ENCODE measurements at regions of chr14 and their contacts with region 1.

Region 1: GRCh38 chr14:21498553-21499526 is 12.3 kb downstream of the METTL3 start:
- DNase-seq: peak; percentile 39 to 58 (median 44)
- ATAC-seq: peak; percentile 78
- H3K4me3 ChIP-seq: no peak overlapping the region
- H3K27ac ChIP-seq: no peak overlapping the region
- H3K4me1 ChIP-seq: no peaks in the 10 kb centered on the region
- H3K27me3 ChIP-seq: no peaks in the 10 kb centered on the region
- CTCF ChIP-seq: peak; percentile 36 to 60 (median 54); a peak in 4 of 6 replicates
- EP300 ChIP-seq: no peak
- POLR2A ChIP-seq: no peak
- RAD21 ChIP-seq: peak; percentile 38 to 63; a peak in 3 of 4 replicates

Region 2: DNA sequence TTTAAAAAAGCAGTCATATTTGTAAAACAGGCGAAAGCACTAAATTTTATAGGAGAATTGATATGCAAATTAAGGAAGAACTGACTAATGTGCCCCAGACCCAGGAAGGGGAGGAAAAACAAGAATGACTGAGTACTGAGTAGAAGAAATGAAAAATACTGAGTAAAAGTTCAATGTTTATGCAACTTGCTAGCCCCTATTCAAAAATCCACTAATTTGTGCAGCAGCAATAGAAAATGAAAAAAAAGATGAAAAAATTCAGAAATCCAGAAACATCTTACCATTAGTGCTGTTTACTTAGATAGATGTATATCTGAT is 49.0 kb before region 1 on chr14:
- CTCF ChIA-PET with region 1: no interaction called
- POLR2A ChIA-PET with region 1: no interaction called
- in situ Hi-C with region 1: no loop called
- intact Hi-C with region 1: no loop called
- DNase-seq: no peak
- ATAC-seq: no peak
- H3K4me3 ChIP-seq: no peak overlapping the region
- H3K27ac ChIP-seq: no peak overlapping the region
- H3K4me1 ChIP-seq: peaks cover 3 to 7% of the 10 kb centered on the region in 2 experiments; a peak in 3 of 5 replicates
- H3K27me3 ChIP-seq: no peaks in the 10 kb centered on the region
- CTCF ChIP-seq: no peak
- EP300 ChIP-seq: no peak
- POLR2A ChIP-seq: no peak
- RAD21 ChIP-seq: no peak

Region 3: GRCh38 chr14:21557084-21557901 is 58.5 kb after region 1 on chr14:
- CTCF ChIA-PET with region 1: interaction called, 24 read pairs
- POLR2A ChIA-PET with region 1: no interaction called
- in situ Hi-C with region 1: loop called (anchors 5 kb)
- intact Hi-C with region 1: loop called (anchors 1 kb)
- DNase-seq: peak; percentile 49 to 88 (median 51)
- ATAC-seq: peak; percentile 84
- H3K4me3 ChIP-seq: peak overlapping the region; percentile 34
- H3K27ac ChIP-seq: peak overlapping the region; percentile 48; the same call in 1 of the 3 replicates
- H3K4me1 ChIP-seq: no peaks in the 10 kb centered on the region; a peak in 1 of 5 replicates
- H3K27me3 ChIP-seq: no peaks in the 10 kb centered on the region
- CTCF ChIP-seq: peak; percentile 49 to 81 (median 60); a peak in 5 of 6 replicates
- EP300 ChIP-seq: no peak; the same call in 1 of the 2 replicates
- POLR2A ChIP-seq: no peak
- RAD21 ChIP-seq: peak; percentile 72 to 77